Esophagus squamous epithelium (tissue), 5 donors: ENCODE measurements at regions of chr11 and their contacts with region 1.

Region 1: GRCh38 chr11:65817835-65818742 is 15.7 kb upstream of the SNX32 start:
- DNase-seq: peak; percentile 53
- H3K4me3 ChIP-seq: peak overlapping the region; percentile 52 to 82 (median 60)
- H3K27ac ChIP-seq: peak overlapping the region; percentile 84 to 94 (median 88)
- H3K4me1 ChIP-seq: peaks cover 8 to 49% (median 12%) of the 10 kb centered on the region in 3 donors
- H3K27me3 ChIP-seq: no peaks in the 10 kb centered on the region
- CTCF ChIP-seq: peak; percentile 95 to 100 (median 98)
- POLR2A ChIP-seq: peak in 1 of 4 donors; percentile 30

Region 2: GRCh38 chr11:65779851-65780577 is 38.1 kb before region 1 on chr11:
- intact Hi-C with region 1: loop called (anchors 5 kb)
- DNase-seq: no peak
- H3K4me3 ChIP-seq: peak overlapping the region; percentile 79 to 100 (median 82)
- H3K27ac ChIP-seq: peak overlapping the region; percentile 88 to 95 (median 91)
- H3K4me1 ChIP-seq: peaks cover 48 to 90% (median 55%) of the 10 kb centered on the region in 3 donors
- H3K27me3 ChIP-seq: peaks cover 0 to 5% (median 0%) of the 10 kb centered on the region in 4 donors
- CTCF ChIP-seq: peak; percentile 91 to 100 (median 96)
- POLR2A ChIP-seq: peak in 1 of 4 donors; percentile 68